MCF 10A (cell line): ENCODE measurements at regions of chr7 and their contacts with region 1.

Region 1: GRCh38 chr7:123154231-123154860 is 45.4 kb downstream of the SLC13A1 start:
- DNase-seq: peak; percentile 92
- H3K4me3 Mint-ChIP-seq: no peak overlapping the region
- H3K27ac Mint-ChIP-seq: no peak overlapping the region
- H3K4me1 Mint-ChIP-seq: peaks cover 6% of the 10 kb centered on the region
- H3K27me3 Mint-ChIP-seq: no peaks in the 10 kb centered on the region
- CTCF ChIP-seq: peak; percentile 77

Region 2: GRCh38 chr7:122219253-122219865 is 935.0 kb before region 1 on chr7:
- CTCF ChIA-PET with region 1: no interaction called
- POLR2A ChIA-PET with region 1: no interaction called
- intact Hi-C with region 1: loop called (anchors 2 kb)
- DNase-seq: peak; percentile 41
- H3K4me3 Mint-ChIP-seq: no peak overlapping the region
- H3K27ac Mint-ChIP-seq: no peak overlapping the region
- H3K4me1 Mint-ChIP-seq: peaks cover 6% of the 10 kb centered on the region
- H3K27me3 Mint-ChIP-seq: peaks cover 18% of the 10 kb centered on the region
- CTCF ChIP-seq: peak; percentile 54

Region 3: DNA sequence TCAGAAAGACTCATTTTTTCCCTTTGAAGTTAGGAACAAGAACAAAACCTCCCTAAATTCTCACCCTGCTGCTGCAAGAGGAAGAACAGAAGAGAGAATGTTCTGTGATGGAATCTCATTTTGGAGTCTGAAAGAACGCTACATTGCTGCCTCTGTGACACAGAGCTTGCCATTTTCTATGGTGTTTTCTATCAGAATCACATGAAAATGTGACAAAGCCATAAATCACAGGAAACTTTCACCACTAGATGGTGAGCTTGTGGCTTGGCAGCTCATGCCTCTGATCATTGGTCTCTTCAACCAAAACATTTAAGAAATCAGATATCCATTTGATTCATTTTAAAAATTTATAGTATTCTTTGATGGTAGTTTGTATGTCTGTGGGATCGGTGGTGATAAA is 351.0 kb before region 1 on chr7:
- CTCF ChIA-PET with region 1: interaction called, 15 read pairs
- POLR2A ChIA-PET with region 1: no interaction called
- intact Hi-C with region 1: loop called (anchors 1 kb)
- DNase-seq: peak; percentile 52
- H3K4me3 Mint-ChIP-seq: no peak overlapping the region
- H3K27ac Mint-ChIP-seq: no peak overlapping the region
- H3K4me1 Mint-ChIP-seq: no peaks in the 10 kb centered on the region
- H3K27me3 Mint-ChIP-seq: no peaks in the 10 kb centered on the region
- CTCF ChIP-seq: peak; percentile 38

Region 4: DNA sequence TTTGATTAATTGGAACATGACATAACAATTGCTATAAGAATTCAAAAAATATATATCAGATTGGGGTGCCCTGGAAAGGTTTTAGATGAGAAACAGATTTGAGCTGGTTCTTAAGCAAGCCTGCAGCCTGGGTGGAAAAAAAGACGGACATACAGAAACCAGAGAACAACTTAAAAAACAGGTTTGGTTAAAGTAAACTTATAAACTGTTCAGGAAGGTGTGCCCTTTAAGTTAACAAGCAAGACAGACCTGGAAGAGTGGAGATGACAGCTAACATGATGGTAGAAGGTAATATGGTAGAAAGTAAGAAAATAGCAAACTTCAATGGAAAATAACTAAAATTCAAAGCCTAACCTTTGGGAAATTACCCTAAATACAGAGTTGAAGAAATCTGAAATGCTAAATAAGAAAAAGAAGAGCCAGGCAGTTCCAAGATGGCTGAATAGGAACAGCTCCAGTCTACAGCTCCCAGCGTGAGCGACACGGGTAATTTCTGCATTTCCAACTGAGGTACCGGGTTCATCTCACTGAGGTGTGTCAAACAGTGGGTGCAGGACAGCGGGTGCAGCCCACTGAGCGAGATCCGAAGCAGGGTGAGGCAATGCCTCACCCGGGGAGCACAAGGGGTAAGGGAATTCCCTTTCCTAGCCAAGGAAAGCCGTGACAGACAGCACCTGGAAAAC is 320.3 kb before region 1 on chr7:
- CTCF ChIA-PET with region 1: no interaction called
- POLR2A ChIA-PET with region 1: no interaction called
- intact Hi-C with region 1: no loop called
- DNase-seq: no peak
- H3K4me3 Mint-ChIP-seq: no peak overlapping the region
- H3K27ac Mint-ChIP-seq: no peak overlapping the region
- H3K4me1 Mint-ChIP-seq: no peaks in the 10 kb centered on the region
- H3K27me3 Mint-ChIP-seq: no peaks in the 10 kb centered on the region
- CTCF ChIP-seq: no peak

Region 5: GRCh38 chr7:123070702-123071286 is 83.6 kb before region 1 on chr7:
- CTCF ChIA-PET with region 1: interaction called, 11 read pairs
- POLR2A ChIA-PET with region 1: interaction called, 3 read pairs
- intact Hi-C with region 1: no loop called
- DNase-seq: no peak
- H3K4me3 Mint-ChIP-seq: no peak overlapping the region
- H3K27ac Mint-ChIP-seq: no peak overlapping the region
- H3K4me1 Mint-ChIP-seq: no peaks in the 10 kb centered on the region
- H3K27me3 Mint-ChIP-seq: peaks cover 19% of the 10 kb centered on the region
- CTCF ChIP-seq: no peak

Region 6: GRCh38 chr7:123367484-123368122 is 213.3 kb after region 1 on chr7:
- CTCF ChIA-PET with region 1: interaction called, 33 read pairs
- POLR2A ChIA-PET with region 1: interaction called, 4 read pairs
- intact Hi-C with region 1: loop called (anchors 1 kb)
- DNase-seq: peak; percentile 60
- H3K4me3 Mint-ChIP-seq: no peak overlapping the region
- H3K27ac Mint-ChIP-seq: no peak overlapping the region
- H3K4me1 Mint-ChIP-seq: no peaks in the 10 kb centered on the region
- H3K27me3 Mint-ChIP-seq: no peaks in the 10 kb centered on the region
- CTCF ChIP-seq: peak; percentile 87